WTC11 (cell line): ENCODE measurements at regions of chr1 and their contacts with region 1.

Region 1: GRCh38 chr1:110495926-110496600 is 22.9 kb downstream of the KCNA10 start:
- DNase-seq: peak; percentile 88
- ATAC-seq: peak; percentile 79
- H3K4me3 Mint-ChIP-seq: no peak overlapping the region
- H3K27ac Mint-ChIP-seq: no peak overlapping the region
- H3K4me1 Mint-ChIP-seq: peaks cover 23% of the 10 kb centered on the region
- H3K27me3 Mint-ChIP-seq: peaks cover 2% of the 10 kb centered on the region; the same call in 1 of the 2 replicates
- CTCF ChIP-seq: peak; percentile 84

Region 2: GRCh38 chr1:110196917-110197765 is 298.9 kb before region 1 on chr1:
- CTCF ChIA-PET with region 1: interaction called, 21 read pairs
- POLR2A ChIA-PET with region 1: no interaction called
- DNase-seq: peak; percentile 42
- ATAC-seq: peak; percentile 95
- H3K4me3 Mint-ChIP-seq: no peak overlapping the region
- H3K27ac Mint-ChIP-seq: no peak overlapping the region
- H3K4me1 Mint-ChIP-seq: peaks cover 2% of the 10 kb centered on the region; the same call in 1 of the 2 replicates
- H3K27me3 Mint-ChIP-seq: no peaks in the 10 kb centered on the region
- CTCF ChIP-seq: peak; percentile 87

Region 3: DNA sequence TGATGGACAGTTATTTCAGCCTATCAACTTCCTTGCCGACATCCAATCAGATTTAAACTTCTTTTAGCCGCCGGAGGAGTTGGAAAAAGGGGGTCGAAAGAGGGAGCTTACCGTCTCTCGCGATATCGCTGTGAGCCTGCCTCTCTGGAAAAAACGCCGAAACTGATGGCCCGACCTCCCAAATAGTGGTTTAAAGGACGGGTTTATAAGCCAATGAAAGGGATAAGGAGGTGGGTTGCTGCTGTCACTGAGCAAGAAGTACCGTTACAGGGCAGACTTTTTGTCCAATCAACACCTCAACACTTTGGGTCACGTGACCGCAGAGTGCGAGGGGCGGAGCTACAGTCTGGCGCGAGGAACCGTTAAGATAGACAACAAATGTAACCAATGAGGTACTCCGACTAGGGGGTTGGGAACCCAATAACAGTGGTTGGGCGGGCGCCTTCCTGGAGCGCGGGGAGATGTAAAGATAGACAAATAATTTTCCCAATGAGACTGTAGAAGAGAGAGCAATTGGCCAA is 157.1 kb before region 1 on chr1 and contains the start of gene RBM15:
- CTCF ChIA-PET with region 1: interaction called, 17 read pairs
- POLR2A ChIA-PET with region 1: no interaction called
- DNase-seq: peak; percentile 96
- ATAC-seq: peak; percentile 84
- H3K4me3 Mint-ChIP-seq: no peak within 1 kb of the TSS
- H3K27ac Mint-ChIP-seq: no peak within 1 kb of the TSS; the same call in 1 of the 2 replicates
- H3K4me1 Mint-ChIP-seq: peaks cover 52% of the 10 kb centered on the region
- H3K27me3 Mint-ChIP-seq: no peaks in the 10 kb centered on the region
- CTCF ChIP-seq: no peak
- total RNA-seq, gene RBM15: 43.5 to 50.6 TPM (median 44.8 TPM) in 3 replicates

Region 4: GRCh38 chr1:110455151-110455550 is 40.9 kb before region 1 on chr1:
- CTCF ChIA-PET with region 1: interaction called, 124 read pairs
- POLR2A ChIA-PET with region 1: no interaction called
- DNase-seq: peak; percentile 74
- ATAC-seq: peak; percentile 90
- H3K4me3 Mint-ChIP-seq: no peak overlapping the region
- H3K27ac Mint-ChIP-seq: peak overlapping the region; percentile 63; the same call in 1 of the 2 replicates
- H3K4me1 Mint-ChIP-seq: peaks cover 15% of the 10 kb centered on the region
- H3K27me3 Mint-ChIP-seq: no peaks in the 10 kb centered on the region; the same call in 1 of the 2 replicates
- CTCF ChIP-seq: no peak

Region 5: DNA sequence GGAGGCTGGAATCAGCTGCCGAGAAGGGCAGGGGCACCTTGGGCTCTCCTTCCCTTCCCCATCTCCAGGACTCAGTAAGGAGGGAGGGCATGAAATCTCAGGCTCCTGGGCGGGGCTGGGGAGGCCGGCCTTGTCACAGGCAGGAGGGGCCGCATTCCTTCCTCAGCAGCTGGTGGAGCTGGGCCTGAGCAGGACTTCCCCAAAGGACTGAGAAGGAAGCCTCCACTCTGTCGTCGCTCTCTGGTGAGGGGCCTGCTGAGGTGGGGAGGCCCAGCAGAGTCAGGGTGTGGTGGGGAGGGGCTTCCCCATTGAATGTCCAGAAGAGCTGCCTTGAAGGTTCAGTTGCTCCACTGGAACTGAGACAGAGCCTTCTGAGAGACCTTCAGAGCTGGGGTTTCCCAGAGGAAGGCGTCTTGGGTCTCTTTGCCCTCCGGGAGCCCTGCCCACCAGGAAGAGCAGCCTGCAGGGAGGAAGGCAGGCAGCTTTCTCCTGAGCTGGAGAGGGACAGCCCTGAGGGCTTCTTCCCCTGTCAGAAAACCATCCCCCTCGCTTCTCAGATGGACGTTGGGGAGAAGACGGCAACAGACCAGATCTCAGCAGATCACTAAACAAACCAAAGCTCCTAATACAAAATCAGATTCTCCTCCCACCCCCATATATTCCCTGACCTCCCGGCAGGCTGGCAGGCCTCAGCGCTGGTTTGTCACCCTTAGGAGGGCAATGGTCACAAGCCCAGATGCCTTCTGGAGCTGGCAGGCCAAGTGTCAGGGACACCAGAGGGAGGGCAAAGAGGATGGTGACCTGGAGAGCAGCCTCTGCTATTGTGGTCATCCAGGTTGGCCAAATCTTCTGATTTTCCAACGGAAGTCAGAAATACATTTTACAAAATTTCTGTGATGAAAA is 12.2 kb after region 1 on chr1:
- CTCF ChIA-PET with region 1: interaction called, 17 read pairs
- POLR2A ChIA-PET with region 1: no interaction called
- DNase-seq: peak; percentile 64
- ATAC-seq: peak; percentile 96
- H3K4me3 Mint-ChIP-seq: no peak overlapping the region
- H3K27ac Mint-ChIP-seq: no peak overlapping the region
- H3K4me1 Mint-ChIP-seq: peaks cover 13% of the 10 kb centered on the region
- H3K27me3 Mint-ChIP-seq: no peaks in the 10 kb centered on the region; the same call in none of the 2 replicates
- CTCF ChIP-seq: no peak

Region 6: GRCh38 chr1:110554871-110555801 is 59.1 kb after region 1 on chr1:
- CTCF ChIA-PET with region 1: interaction called, 12 read pairs
- POLR2A ChIA-PET with region 1: no interaction called
- DNase-seq: peak; percentile 73
- ATAC-seq: peak; percentile 88
- H3K4me3 Mint-ChIP-seq: peak overlapping the region; percentile 66
- H3K27ac Mint-ChIP-seq: no peak overlapping the region
- H3K4me1 Mint-ChIP-seq: peaks cover 8% of the 10 kb centered on the region
- H3K27me3 Mint-ChIP-seq: peaks cover 65% of the 10 kb centered on the region
- CTCF ChIP-seq: peak; percentile 59